ENCODE measurements at regions of chr5 and their contacts with region 1.

Region 1: DNA sequence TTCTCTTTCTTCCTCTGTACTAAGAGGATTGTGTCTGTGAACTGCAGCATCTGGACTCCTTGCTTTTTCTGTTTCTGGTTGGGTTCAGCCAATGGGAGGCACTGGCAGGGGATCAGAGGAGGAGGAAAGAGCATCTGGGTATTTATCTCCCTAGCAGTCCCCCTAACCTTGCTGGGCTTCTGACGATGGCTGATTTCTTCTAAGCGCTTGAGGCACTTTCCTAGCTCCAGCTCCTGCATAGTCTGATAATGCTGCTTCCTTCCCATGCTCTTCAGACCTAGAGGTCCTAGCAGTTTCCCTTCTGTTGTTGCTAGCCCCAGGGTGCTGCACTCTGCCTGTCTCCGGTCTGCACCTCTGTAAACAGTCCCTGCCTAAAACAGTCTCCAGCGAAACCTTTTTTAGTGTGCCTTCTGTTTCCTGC is 225.1 kb downstream of the PDZD2 start:
- DNase-seq: no peak
- H3K4me3 ChIP-seq: no peak overlapping the region
- H3K27ac ChIP-seq: no peak overlapping the region
- H3K4me1 ChIP-seq: no peaks in the 10 kb centered on the region
- H3K27me3 ChIP-seq: no peaks in the 10 kb centered on the region
- CTCF ChIP-seq: no peak
- EP300 ChIP-seq: no peak
- POLR2A ChIP-seq: no peak

Region 2: DNA sequence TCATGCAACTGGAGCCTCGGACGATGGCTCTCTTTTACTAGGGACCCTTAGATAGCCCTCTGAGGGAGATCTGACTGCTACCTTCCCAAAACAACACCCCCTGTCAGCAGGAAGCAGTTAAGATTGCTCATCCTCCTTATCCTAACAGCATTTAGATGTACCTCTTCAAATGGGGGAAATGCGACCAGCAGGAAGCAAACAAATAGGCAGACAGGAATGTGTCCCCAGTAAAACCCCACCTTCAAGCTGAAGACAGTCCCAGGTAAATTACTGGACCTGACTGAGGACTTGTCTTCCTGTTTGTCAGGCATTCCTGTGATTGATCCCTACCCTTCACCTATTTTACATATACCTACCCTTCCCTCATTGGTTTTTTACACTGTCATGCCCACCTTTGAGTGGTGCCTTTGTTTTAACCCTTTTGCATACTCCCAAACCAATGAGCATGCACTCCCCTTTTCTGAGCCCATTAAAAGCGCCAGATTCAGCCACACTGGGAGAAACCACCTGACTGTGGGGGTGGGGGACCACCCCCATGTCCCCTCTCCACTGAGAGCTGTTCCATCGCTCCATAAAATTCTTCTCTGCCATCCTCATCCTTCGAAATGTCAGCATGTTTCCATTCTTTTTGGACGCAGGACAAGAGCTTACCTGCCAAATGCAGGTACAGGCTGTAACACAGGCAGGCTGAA is 1624.5 kb before region 1 on chr5:
- intact Hi-C with region 1: no loop called
- DNase-seq: no peak
- H3K4me3 ChIP-seq: no peak overlapping the region
- H3K27ac ChIP-seq: no peak overlapping the region
- H3K4me1 ChIP-seq: no peaks in the 10 kb centered on the region
- H3K27me3 ChIP-seq: no peaks in the 10 kb centered on the region
- CTCF ChIP-seq: no peak
- EP300 ChIP-seq: no peak
- POLR2A ChIP-seq: no peak

Region 3: GRCh38 chr5:31833005-31833404 is 31.0 kb before region 1 on chr5:
- intact Hi-C with region 1: loop called in 1 of 4 experiments (anchors 2 kb)
- DNase-seq: no peak
- H3K4me3 ChIP-seq: no peak overlapping the region
- H3K27ac ChIP-seq: no peak overlapping the region
- H3K4me1 ChIP-seq: no peaks in the 10 kb centered on the region
- H3K27me3 ChIP-seq: no peaks in the 10 kb centered on the region
- CTCF ChIP-seq: no peak
- EP300 ChIP-seq: no peak
- POLR2A ChIP-seq: no peak

Measured in ovary (tissue), 10 donors.